Gastrocnemius medialis (tissue), 4 donors: ENCODE measurements at regions of chr3 and their contacts with region 1.

Region 1: GRCh38 chr3:66998113-66998903 is at the start of gene KBTBD8:
- DNase-seq: peak; percentile 97 to 98
- ATAC-seq: peak; percentile 96 to 98
- H3K4me3 ChIP-seq: peak within 1 kb of the TSS; percentile 78 to 84 (median 82)
- H3K27ac ChIP-seq: peak within 1 kb of the TSS; percentile 67 to 73 (median 68)
- H3K4me1 ChIP-seq: peaks cover 14 to 19% of the 10 kb centered on the region in 2 donors
- H3K27me3 ChIP-seq: peaks cover 0 to 4% (median 0%) of the 10 kb centered on the region in 3 donors
- CTCF ChIP-seq: no peak
- POLR2A ChIP-seq: peak; percentile 48 to 74
- total RNA-seq, gene KBTBD8: 1.1 to 8.0 (median 1.6) TPM

Region 2: DNA sequence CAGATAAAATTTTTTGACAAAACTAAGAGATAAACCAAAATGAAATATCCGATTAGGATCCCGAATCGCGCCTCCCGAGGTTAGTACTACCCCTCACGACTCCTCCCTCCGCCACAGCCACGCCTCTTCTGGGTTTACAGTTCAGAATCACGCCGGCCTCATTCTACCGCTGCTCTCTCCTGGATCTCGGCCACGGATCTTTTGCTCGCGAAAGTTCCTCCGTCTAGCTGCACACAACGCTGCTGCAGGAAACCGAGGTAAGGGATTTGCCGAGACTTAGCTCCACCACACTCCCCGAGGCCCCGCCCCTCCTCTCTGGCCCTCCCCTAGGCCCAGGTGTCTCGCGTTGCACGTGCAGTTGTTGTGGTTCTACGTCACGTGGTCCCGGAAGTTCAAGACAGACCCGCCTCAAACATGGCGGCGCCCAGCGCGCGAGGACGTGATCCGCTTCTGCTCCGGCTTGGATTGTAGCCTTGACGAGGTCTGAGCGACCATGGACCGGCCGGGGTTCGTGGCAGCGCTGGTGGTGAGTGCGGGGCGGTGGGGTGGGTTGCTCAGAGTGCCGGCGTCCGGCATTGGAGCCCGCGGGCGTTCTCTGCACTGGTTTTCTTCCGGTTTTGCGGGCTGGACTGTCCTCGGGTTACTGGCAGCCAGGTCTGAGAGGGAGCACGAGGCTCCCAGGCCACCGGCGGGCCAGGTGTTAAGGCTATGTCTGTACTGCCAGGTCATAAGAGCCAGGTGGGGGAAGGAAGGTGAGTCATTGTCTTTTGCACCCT is 777.5 kb before region 1 on chr3 and contains the start of gene SLC25A26:
- in situ Hi-C with region 1: no loop called
- intact Hi-C with region 1: loop called (anchors 2 kb)
- DNase-seq: peak; percentile 96 to 97
- ATAC-seq: peak; percentile 98
- H3K4me3 ChIP-seq: peak within 1 kb of the TSS; percentile 73 to 89 (median 84)
- H3K27ac ChIP-seq: peak within 1 kb of the TSS; percentile 84 to 91 (median 89)
- H3K4me1 ChIP-seq: peaks cover 12 to 13% of the 10 kb centered on the region in 2 donors
- H3K27me3 ChIP-seq: no peaks in the 10 kb centered on the region
- CTCF ChIP-seq: no peak
- POLR2A ChIP-seq: peak; percentile 63 to 64
- total RNA-seq, gene SLC25A26: 24.1 to 44.3 (median 32.4) TPM

Region 3: GRCh38 chr3:66483406-66483906 is 514.9 kb before region 1 on chr3:
- in situ Hi-C with region 1: no loop called
- intact Hi-C with region 1: no loop called
- DNase-seq: peak; percentile 78 to 83
- ATAC-seq: peak; percentile 50 to 64
- H3K4me3 ChIP-seq: peak overlapping the region; percentile 26 to 38 (median 30)
- H3K27ac ChIP-seq: peak overlapping the region; percentile 92 to 96 (median 94)
- H3K4me1 ChIP-seq: peaks cover 90 to 93% of the 10 kb centered on the region in 2 donors
- H3K27me3 ChIP-seq: no peaks in the 10 kb centered on the region
- CTCF ChIP-seq: no peak
- POLR2A ChIP-seq: no peak

Region 4: DNA sequence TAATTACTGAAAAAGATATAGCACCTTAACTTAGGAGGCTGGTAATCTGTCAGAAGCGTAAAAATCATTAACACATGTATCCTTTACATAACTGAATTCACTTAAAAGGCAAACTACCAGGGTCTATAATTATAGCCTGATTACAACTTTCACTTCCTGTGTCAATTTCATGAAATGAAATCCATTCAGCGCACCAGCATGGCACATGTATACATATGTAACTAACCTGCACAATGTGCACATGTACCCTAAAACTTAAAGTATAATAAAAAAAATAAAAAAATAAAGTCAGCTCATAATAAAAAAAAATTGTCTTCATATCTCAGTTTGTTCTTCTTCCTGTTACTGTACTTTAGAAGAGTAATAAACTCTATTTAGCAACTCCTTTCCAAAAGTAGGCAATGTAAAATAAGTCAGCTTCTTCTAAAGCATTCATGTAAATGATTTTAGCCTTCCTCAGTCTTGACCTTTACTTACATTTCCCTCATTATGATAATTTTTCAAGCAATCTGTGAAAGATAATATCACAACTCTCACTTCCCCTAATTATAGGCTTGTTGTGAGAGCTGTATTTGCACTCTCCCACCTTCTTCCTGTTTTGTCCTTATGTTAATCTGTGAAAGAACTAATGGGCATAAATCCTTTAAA is 49.9 kb after region 1 on chr3:
- in situ Hi-C with region 1: no loop called
- intact Hi-C with region 1: no loop called
- DNase-seq: no peak
- ATAC-seq: no peak
- H3K4me3 ChIP-seq: no peak overlapping the region
- H3K27ac ChIP-seq: no peak overlapping the region
- H3K4me1 ChIP-seq: no peaks in the 10 kb centered on the region
- H3K27me3 ChIP-seq: no peaks in the 10 kb centered on the region
- CTCF ChIP-seq: no peak
- POLR2A ChIP-seq: no peak

Region 5: DNA sequence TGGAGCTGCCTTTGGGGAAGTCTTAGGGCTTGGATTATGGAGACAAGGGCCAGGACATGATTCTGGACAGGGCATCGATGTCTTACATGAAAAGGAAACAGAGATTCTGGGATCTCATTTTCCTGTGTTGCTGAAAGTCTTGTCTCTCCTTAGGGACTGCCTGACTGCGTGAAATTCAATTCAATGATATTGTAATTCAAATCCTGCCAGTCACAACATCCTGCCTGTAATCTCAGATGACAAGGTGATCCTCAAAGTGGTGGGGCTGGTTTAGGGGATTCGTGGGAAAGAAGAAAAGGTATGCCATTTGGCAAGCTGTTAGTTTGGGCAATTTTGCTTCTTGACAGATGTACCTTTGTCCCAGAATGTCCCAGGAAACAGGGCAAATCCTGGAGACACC is 128.9 kb after region 1 on chr3:
- in situ Hi-C with region 1: no loop called
- intact Hi-C with region 1: no loop called
- DNase-seq: no peak
- ATAC-seq: no peak
- H3K4me3 ChIP-seq: no peak overlapping the region
- H3K27ac ChIP-seq: no peak overlapping the region
- H3K4me1 ChIP-seq: no peaks in the 10 kb centered on the region
- H3K27me3 ChIP-seq: no peaks in the 10 kb centered on the region
- CTCF ChIP-seq: no peak
- POLR2A ChIP-seq: no peak

Region 6: DNA sequence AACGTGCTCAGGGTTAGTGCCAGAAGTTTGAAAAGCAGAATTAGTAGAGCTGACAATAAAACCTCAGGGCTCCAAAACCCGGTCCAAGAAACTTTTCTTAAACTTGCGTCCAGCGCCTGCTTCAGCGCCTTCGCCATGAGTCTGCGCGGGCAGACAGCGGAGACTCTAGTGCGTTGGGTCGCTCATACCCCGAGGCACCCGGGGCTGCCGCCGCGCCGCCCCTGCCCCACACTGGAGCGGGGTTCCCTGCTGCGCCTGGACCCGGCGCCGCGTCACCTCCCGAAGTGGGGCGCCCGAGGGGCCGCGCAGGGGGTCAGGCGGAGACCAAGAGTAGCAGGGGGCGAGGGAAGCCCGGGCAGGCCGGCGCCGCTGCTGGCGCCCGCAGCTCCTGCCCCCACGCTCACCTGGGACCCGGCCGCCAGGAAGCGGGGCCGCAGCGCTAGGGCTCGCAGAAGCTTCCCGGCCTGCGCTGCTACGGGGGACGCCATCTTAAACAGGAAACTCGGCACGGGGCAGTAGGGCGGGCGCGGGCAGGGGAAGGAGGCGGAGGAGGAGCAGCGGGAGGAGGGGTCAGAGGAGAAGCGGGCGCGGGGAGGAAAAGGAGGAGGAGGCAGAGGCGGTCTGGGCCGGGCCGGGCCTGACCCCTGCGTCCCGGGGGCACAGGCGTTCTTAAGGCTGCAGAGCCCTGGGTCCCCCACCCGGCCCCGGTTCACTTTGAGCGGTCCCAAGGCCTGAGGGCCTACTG is 656.0 kb after region 1 on chr3 and contains the start of gene SUCLG2:
- in situ Hi-C with region 1: no loop called
- intact Hi-C with region 1: loop called (anchors 5 kb)
- DNase-seq: peak; percentile 89 to 90
- ATAC-seq: peak; percentile 93 to 94
- H3K4me3 ChIP-seq: peak within 1 kb of the TSS; percentile 66 to 90 (median 77)
- H3K27ac ChIP-seq: peak within 1 kb of the TSS; percentile 81 to 96 (median 95)
- H3K4me1 ChIP-seq: peaks cover 20 to 40% of the 10 kb centered on the region in 2 donors
- H3K27me3 ChIP-seq: no peaks in the 10 kb centered on the region
- CTCF ChIP-seq: no peak
- POLR2A ChIP-seq: peak; percentile 58 to 72
- total RNA-seq, gene SUCLG2: 64.3 to 106 (median 73.2) TPM